Right cardiac atrium (tissue), 5 donors: ENCODE measurements at regions of chr9 and their contacts with region 1.

Region 1: DNA sequence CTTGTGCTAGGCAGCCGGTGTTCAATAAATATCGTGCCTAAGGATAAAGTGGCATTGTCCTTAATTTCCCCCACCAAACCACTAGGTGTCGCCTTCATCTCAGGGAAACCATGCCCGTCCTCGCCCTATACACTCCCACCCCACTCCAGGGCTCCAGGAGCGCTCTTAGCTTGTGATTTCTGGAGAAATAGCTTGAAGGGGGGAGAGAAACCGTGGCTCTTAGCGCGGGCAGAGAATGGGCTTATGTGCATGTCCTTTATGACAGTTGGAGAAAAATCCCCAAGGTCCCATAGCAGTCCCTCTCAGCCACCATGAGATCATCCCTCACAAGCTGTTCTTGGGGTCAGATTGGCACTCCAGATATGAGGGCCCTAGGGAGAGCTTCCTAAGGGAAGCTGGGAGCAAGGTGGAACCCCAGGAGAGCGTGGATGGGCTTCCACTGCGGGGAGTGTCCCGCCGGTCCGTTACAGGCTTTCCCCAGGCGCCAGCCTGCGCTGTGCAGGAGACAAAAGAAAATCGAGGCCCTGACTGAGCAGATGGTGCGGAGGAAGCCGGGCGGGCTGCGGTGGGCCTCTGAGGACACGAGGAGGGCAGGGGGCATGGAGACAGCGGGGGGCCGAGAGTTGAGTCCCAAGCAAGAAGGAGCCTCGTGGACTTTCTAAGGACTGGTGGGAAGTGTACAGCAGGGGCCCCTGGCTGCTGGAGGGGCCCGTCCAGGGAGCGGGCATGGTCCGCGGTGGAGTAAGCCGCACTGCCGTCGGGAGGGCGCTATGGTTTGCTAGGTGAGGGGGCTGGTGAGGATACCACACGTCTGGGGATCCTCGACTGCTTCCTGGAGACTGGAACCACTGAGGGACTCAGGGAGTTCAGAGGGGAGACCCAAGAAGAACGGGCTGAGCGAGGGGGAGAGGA is 750 bp upstream of the NPR2 start:
- DNase-seq: peak; percentile 73 to 84 (median 79)
- ATAC-seq: peak; percentile 88 to 90
- H3K4me3 ChIP-seq: peak overlapping the region; percentile 58
- H3K27ac ChIP-seq: peak overlapping the region; percentile 41
- H3K4me1 ChIP-seq: no peaks in the 10 kb centered on the region
- H3K27me3 ChIP-seq: no peaks in the 10 kb centered on the region

Region 2: GRCh38 chr9:35452481-35452880 is 338.2 kb before region 1 on chr9:
- intact Hi-C with region 1: no loop called
- DNase-seq: no peak
- ATAC-seq: no peak
- H3K4me3 ChIP-seq: no peak overlapping the region
- H3K27ac ChIP-seq: no peak overlapping the region
- H3K4me1 ChIP-seq: no peaks in the 10 kb centered on the region
- H3K27me3 ChIP-seq: no peaks in the 10 kb centered on the region

Region 3: DNA sequence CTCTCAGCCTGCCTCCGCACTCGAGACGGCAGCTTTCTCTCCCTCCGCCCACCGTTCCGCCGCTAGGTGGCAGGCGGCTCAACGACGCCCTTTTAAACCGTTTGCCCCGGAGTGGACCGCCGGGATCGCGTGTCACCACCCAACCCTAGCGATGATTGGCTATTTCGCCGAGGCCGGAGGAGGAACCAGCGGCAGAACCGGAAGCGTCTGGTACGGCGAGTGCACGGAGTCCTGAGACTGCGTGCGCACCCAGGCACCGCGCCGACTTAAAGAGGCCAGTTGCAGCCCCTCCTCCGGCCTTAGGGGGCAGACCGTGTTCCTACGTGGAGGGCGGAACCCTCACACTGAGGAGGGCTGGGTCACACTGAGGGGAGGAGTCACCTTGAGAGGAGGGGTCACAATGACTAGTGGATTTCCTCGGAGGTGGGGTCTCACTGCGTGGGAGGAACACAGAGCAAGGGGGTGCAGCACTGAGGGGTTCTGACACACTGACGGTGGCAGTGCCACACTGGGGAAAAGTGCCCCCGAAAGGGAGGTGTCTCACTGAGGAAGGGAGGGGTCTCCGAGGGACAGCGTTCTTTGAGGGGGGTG is 186.6 kb before region 1 on chr9:
- intact Hi-C with region 1: no loop called
- DNase-seq: peak; percentile 100
- ATAC-seq: peak; percentile 97
- H3K4me3 ChIP-seq: peak overlapping the region; percentile 98
- H3K27ac ChIP-seq: peak overlapping the region; percentile 82
- H3K4me1 ChIP-seq: no peaks in the 10 kb centered on the region
- H3K27me3 ChIP-seq: no peaks in the 10 kb centered on the region

Region 4: DNA sequence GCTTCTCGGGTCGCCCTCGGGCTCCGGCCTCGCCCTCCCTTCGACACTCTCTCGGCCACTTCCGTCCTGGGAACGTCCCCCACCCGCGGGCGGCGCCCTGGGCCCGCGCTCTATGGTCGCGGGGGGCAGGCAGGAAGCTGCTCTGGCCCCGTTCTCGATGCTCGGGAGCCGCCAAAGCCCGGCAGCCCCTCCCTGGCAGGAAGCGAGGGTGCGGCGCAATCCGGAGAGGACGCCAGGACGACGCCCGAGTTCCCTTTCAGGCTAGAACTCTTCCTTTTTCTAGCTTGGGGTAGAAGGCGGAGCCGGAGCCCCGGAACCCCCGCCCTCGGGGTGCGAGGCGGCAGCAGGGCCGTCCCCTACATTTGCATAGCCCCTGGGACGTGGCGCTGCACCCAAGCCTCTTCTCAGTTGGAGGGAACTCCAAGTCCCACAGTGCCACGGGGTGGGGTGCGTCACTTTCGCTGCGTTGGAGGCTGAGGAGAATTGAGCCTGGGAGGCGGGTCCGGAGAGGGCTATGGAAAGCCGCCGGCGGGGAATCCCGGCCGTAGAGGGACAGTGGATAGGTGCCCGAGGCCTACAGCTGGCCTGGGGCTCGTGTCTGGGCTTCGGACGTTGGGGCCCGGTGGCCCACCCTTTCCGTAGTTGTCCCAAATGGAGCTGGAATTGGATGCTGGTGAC is 58.4 kb before region 1 on chr9 and contains the starts of genes CREB3 and TLN1:
- intact Hi-C with region 1: no loop called
- DNase-seq: peak; percentile 99 to 100 (median 99)
- ATAC-seq: peak; percentile 92 to 94
- H3K4me3 ChIP-seq: peak within 1 kb of the TSS; percentile 64
- H3K27ac ChIP-seq: peak within 1 kb of the TSS; percentile 93
- H3K4me1 ChIP-seq: peaks cover 21% of the 10 kb centered on the region
- H3K27me3 ChIP-seq: no peaks in the 10 kb centered on the region
- total RNA-seq, gene CREB3: 24.5 to 35.4 (median 25.7) TPM
- total RNA-seq, gene TLN1: 263 to 375 (median 298) TPM

Region 5: GRCh38 chr9:35882263-35882848 is 91.7 kb after region 1 on chr9:
- intact Hi-C with region 1: loop called (anchors 2 to 5 kb)
- DNase-seq: peak; percentile 87 to 95 (median 91)
- ATAC-seq: peak; percentile 79 to 84
- H3K4me3 ChIP-seq: no peak overlapping the region
- H3K27ac ChIP-seq: no peak overlapping the region
- H3K4me1 ChIP-seq: no peaks in the 10 kb centered on the region
- H3K27me3 ChIP-seq: no peaks in the 10 kb centered on the region

Region 6: DNA sequence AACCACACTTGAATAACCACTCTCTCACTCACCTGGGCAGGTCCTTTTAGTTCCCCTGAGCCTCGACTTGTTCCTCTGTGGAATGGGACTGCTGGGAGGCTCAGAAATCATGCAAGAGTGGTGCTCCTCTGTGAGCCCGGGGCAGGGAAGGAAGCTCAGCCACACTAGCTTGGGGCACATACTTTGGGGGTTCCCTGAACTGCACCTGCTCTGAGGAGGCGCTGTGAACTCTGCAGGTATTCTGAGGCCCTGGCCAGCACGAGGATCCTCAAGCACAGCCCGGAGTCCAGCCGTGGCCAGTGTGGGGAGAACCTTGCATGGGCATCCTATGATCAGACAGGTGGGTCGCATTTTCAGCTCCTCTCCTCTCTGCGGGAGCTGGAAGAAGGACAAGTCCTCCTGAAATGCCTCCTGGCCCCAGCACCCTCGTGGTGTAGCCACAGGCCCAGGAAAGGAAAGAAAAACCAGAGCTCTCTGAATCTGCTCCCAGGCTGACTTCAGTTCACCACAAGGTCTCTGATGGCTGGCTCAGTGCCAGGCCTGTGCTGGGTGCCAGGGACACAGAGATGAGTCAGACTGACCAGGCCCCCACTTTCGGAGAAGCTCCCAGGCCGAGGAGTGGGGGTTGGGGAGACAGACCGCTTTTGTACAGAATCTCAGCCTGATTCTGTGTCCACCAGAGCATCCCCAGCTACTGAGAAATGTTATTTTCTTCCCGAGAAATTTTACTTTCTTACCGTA is 357.8 kb after region 1 on chr9:
- intact Hi-C with region 1: no loop called
- DNase-seq: peak; percentile 96 to 99 (median 98)
- ATAC-seq: peak; percentile 87 to 88
- H3K4me3 ChIP-seq: no peak overlapping the region
- H3K27ac ChIP-seq: peak overlapping the region; percentile 50
- H3K4me1 ChIP-seq: peaks cover 4% of the 10 kb centered on the region
- H3K27me3 ChIP-seq: no peaks in the 10 kb centered on the region